Calu3 (cell line): ENCODE measurements at regions of chr6 and their contacts with region 1.

Region 1: GRCh38 chr6:74320074-74320473 is 624.1 kb downstream of the CD109 start:
- DNase-seq: no peak
- H3K4me3 Mint-ChIP-seq: no peak overlapping the region
- H3K27ac Mint-ChIP-seq: no peak overlapping the region
- H3K4me1 Mint-ChIP-seq: peaks cover 9% of the 10 kb centered on the region
- H3K27me3 Mint-ChIP-seq: no peaks in the 10 kb centered on the region
- CTCF ChIP-seq: no peak

Region 2: DNA sequence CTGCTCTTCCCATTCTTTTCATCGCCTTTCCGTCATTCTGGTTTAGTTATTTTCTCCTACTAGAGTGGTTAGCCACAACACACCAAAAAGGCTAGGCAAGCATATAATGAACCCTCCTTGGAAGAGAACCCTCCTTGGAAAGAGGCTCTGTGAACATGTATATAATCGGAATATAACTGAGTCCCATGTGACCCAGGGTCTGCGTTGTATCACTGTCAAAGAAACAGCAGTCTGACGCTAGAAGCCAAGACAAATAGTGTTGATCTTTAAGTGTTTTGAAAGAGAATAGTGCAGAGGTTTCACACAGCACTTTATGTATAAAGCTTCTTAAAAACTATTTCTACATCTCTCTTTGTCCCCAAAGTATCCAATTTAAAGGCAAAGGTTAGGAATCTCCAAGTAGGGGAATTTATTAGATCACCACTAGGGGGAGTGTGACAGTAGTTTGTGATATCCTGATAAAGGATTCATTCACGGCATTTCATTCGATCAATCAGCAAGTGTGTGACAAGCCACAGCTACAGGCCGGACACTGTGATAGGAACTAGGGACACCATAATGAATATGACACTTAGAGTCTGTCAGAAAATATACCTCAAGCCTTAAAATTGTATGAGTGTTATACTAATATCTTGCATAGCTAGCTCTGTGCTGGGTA is 228.8 kb before region 1 on chr6:
- CTCF ChIA-PET with region 1: no interaction called
- intact Hi-C with region 1: loop called (anchors 10 kb)
- DNase-seq: peak; percentile 25
- H3K4me3 Mint-ChIP-seq: no peak overlapping the region
- H3K27ac Mint-ChIP-seq: no peak overlapping the region
- H3K4me1 Mint-ChIP-seq: peaks cover 9% of the 10 kb centered on the region
- H3K27me3 Mint-ChIP-seq: no peaks in the 10 kb centered on the region
- CTCF ChIP-seq: peak; percentile 52